ENCODE measurements at regions of chr2 and their contacts with region 1.

Region 1: GRCh38 chr2:166057370-166058164 is 70.3 kb downstream of the SCN1A start:
- DNase-seq: no peak
- ATAC-seq: peak; percentile 44; the same call in 1 of the 2 replicates
- H3K4me3 ChIP-seq: no peak overlapping the region
- H3K27ac ChIP-seq: no peak overlapping the region
- H3K4me1 ChIP-seq: no peaks in the 10 kb centered on the region
- H3K27me3 ChIP-seq: peaks cover 36% of the 10 kb centered on the region
- CTCF ChIP-seq: peak; percentile 41 to 56 (median 54); a peak in 5 of 6 replicates
- POLR2A ChIP-seq: no peak
- RAD21 ChIP-seq: peak; percentile 56

Region 2: DNA sequence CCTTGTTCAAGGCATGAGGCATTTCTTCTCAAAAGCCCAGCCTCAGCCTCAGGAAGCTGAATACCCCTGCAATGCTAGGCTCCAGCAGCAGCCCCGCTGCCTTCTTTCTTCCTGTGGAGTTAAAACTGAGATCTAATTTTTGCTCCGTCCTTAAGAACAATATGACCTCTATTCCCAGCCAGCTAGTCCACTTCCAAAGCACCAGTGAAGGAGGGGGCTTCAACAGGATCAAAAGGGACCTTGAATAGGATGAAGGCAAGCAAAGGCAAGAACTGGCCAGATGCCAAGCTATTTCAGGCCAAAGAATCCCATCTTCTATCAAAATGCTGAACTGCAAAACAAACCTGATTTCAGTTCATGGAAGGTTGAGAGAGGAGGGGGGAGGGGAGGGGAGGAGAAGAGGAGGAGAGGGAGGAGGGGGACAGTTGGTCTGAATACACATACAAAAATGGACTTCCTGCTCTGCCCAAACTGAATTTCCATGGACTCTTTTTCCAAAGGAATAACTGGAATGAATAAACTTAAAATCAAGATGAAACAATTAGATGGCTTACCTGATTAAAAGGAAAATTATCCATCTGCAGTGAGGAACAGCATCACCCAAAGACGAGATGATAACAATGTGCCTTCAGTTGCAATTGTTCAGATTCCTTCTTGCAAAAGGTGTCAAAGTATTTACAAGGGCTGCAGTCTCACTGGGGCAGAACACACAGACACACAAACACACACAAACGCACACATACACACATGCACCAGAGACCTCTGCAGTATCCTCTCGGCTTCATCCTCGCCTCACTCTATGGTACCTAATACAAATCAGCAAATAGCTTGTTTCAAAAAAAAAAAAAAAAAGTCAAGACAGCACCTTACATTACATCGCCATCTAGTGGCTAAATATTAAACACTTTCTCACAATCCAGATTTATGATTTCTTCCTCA is 69.9 kb after region 1 on chr2 and contains the start of gene SCN1A:
- CTCF ChIA-PET with region 1: interaction called, 46 read pairs
- POLR2A ChIA-PET with region 1: no interaction called
- RAD21 ChIA-PET with region 1: interaction called in 1 of 2 experiments, 8 read pairs
- intact Hi-C with region 1: loop called (anchors 2 kb)
- DNase-seq: peak; percentile 32
- ATAC-seq: peak; percentile 70
- H3K4me3 ChIP-seq: no peak within 1 kb of the TSS
- H3K27ac ChIP-seq: no peak within 1 kb of the TSS
- H3K4me1 ChIP-seq: no peaks in the 10 kb centered on the region
- H3K27me3 ChIP-seq: peaks cover 62% of the 10 kb centered on the region
- CTCF ChIP-seq: peak; percentile 43 to 73 (median 49); a peak in 4 of 6 replicates
- POLR2A ChIP-seq: no peak
- RAD21 ChIP-seq: peak; percentile 70
- total RNA-seq, gene SCN1A: not detected

Region 3: DNA sequence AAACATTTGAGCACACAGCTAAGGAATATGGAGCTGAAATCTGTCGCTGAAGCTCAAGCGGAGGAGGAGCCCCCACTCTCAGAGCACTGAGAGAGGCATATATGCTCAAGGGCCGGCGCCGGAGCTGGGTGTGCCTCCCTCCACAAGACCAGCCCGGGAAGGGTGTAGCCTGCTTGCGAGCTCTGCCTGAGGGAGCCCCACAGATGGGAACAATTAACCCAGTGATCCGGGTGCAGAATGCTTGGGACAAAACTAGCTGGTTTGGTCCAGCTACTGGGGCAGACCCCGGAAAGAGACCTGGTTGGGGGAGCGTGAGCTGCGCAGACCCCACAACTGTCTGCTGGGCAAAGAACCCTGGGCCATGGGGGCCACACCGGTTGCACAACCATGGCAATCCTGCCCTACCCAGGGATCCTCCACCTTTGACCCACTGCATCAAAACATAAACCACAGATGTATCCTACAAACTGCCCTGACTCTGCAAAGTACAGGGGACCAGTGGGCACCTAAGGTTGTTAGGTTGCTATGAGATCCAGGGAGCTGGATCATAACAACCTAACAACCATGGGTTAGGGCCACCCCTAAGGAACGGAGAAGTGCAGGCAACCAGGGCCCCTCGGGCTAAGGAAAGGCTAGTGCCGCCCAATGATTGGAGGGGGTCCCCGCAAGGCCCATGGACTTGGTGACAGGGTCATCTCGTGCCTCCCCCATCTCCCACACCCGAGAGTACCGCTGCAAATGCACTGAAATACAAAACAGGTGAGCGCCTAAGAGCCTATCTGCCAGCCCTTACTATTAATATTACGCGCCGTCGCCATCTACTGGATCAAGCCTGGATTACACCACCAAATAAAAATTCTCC is 123.6 kb after region 1 on chr2:
- CTCF ChIA-PET with region 1: interaction called, 3 read pairs
- POLR2A ChIA-PET with region 1: no interaction called
- RAD21 ChIA-PET with region 1: no interaction called
- intact Hi-C with region 1: loop called (anchors 2 kb)
- DNase-seq: peak; percentile 13
- ATAC-seq: peak; percentile 95
- H3K4me3 ChIP-seq: no peak overlapping the region
- H3K27ac ChIP-seq: no peak overlapping the region
- H3K4me1 ChIP-seq: no peaks in the 10 kb centered on the region
- H3K27me3 ChIP-seq: peaks cover 19% of the 10 kb centered on the region; the same call in 1 of the 2 replicates
- CTCF ChIP-seq: peak; percentile 40 to 67 (median 62); a peak in 5 of 6 replicates
- POLR2A ChIP-seq: no peak
- RAD21 ChIP-seq: peak; percentile 54

Measured in HCT116 (cell line).